ENCODE measurements at regions of chr2 and their contacts with region 1.

Region 1: GRCh38 chr2:28736034-28736433 is 15.6 kb upstream of the PPP1CB start:
- DNase-seq: peak; percentile 86

Region 2: GRCh38 chr2:28716265-28716867 is 19.7 kb before region 1 on chr2:
- intact Hi-C with region 1: loop called (anchors 1 kb)
- DNase-seq: no peak

Measured in cardiac septum (tissue), 1 donor.